ENCODE measurements at regions of chr20 and their contacts with region 1.

Region 1: GRCh38 chr20:48620519-48621254 is 207.1 kb downstream of the PREX1 start:
- DNase-seq: peak; percentile 65
- H3K4me3 Mint-ChIP-seq: peak overlapping the region; percentile 75
- H3K27ac Mint-ChIP-seq: no peak overlapping the region
- H3K4me1 Mint-ChIP-seq: peaks cover 12% of the 10 kb centered on the region
- H3K27me3 Mint-ChIP-seq: no peaks in the 10 kb centered on the region

Region 2: GRCh38 chr20:47663333-47664067 is 957.2 kb before region 1 on chr20:
- intact Hi-C with region 1: loop called (anchors 5 kb)
- DNase-seq: peak; percentile 64
- H3K4me3 Mint-ChIP-seq: no peak overlapping the region
- H3K27ac Mint-ChIP-seq: peak overlapping the region; percentile 11
- H3K4me1 Mint-ChIP-seq: peaks cover 13% of the 10 kb centered on the region
- H3K27me3 Mint-ChIP-seq: no peaks in the 10 kb centered on the region

Region 3: GRCh38 chr20:47677635-47678453 is 942.8 kb before region 1 on chr20:
- intact Hi-C with region 1: loop called (anchors 1 kb)
- DNase-seq: peak; percentile 42
- H3K4me3 Mint-ChIP-seq: no peak overlapping the region
- H3K27ac Mint-ChIP-seq: no peak overlapping the region
- H3K4me1 Mint-ChIP-seq: no peaks in the 10 kb centered on the region
- H3K27me3 Mint-ChIP-seq: no peaks in the 10 kb centered on the region

Region 4: DNA sequence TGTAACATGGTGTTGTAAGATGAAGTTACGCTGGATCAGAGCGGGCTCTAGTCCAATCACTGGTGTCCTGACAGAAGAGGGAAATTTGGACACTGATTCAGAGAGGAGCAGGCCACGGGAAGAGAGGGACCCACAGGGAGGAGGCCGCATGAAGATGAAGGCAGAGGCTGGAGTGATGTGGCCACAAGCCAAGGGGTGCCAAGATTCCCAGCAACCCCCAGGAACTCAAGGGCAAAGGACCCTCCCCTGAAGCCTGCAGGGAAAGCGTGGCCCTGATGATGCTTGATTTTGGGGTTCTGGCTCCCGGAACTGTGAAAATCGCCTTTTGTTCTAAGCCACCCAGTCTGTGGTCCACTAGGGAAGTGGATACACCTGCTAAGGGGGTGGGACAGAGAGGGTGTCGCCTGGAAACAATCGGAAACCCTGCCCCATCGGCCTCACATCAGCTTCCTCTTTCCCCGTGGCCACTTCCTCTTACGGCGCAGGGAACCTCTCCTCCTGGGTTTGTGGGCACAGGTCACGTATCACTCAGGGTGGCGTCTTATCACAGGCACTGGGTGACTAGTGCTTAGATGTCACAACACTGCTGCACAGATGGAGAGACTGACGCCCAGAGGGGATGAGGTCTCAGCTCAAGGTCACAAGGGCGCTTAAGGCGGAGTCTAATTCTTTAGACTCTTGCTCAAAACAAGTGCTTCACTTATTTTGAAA is 893.4 kb before region 1 on chr20:
- intact Hi-C with region 1: loop called (anchors 2 kb)
- DNase-seq: peak; percentile 83
- H3K4me3 Mint-ChIP-seq: peak overlapping the region; percentile 86
- H3K27ac Mint-ChIP-seq: peak overlapping the region; percentile 98
- H3K4me1 Mint-ChIP-seq: peaks cover 44% of the 10 kb centered on the region
- H3K27me3 Mint-ChIP-seq: no peaks in the 10 kb centered on the region